Activated CD8-positive, alpha-beta T cell treated with anti-CD3 and anti-CD28 coated beads for 36 hours (primary cell): ENCODE measurements at regions of chr1 and their contacts with region 1.

Region 1: DNA sequence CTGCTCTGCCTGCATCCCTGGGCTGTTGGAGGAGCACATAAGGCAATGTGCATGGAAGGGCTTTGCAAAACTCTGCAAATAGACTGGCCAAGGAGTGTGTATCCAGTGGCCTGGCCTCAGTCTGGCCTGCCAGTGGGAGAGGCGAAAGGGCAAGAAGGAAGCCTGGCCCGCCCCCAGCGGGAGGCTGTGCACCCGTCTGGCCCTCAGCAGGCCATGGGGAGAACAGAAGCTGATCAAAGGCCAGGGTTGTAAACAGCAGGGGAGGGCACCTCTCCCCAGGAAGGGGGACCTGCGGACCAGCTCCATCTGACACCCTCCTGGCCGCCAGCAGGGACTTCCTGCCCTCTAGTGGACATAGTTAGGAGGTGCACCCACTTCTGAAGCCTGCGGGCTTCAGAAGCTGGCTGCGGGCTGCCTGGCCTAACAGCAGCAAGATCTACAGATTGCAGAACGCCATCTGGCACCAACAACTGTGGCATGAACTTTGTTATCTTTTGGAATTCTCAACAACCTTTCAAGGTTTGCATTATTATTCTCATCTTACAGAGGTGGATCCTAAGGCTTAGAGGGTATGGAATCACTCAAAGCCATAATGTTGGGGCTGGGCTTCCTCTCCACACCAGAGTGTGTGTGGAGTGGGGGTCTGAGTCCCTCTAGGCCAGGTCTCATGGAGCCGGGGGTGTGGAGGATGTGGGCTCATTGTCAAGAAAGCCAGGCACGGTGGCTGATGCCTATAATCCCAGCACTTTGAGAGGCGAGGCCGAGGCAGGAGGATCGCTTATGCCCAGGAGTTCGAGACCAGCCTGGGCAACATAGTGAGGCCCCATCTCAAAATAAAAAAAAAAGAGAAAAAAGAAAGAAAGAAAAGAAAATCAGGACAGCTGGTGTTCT is 18.9 kb upstream of the CDK18 start:
- DNase-seq: peak; percentile 79
- ATAC-seq: peak; percentile 76
- H3K4me3 Mint-ChIP-seq: no peak overlapping the region
- H3K27ac Mint-ChIP-seq: no peak overlapping the region
- H3K4me1 Mint-ChIP-seq: peaks cover 27% of the 10 kb centered on the region
- H3K27me3 Mint-ChIP-seq: peaks cover 42% of the 10 kb centered on the region
- CTCF ChIP-seq: peak; percentile 95

Region 2: DNA sequence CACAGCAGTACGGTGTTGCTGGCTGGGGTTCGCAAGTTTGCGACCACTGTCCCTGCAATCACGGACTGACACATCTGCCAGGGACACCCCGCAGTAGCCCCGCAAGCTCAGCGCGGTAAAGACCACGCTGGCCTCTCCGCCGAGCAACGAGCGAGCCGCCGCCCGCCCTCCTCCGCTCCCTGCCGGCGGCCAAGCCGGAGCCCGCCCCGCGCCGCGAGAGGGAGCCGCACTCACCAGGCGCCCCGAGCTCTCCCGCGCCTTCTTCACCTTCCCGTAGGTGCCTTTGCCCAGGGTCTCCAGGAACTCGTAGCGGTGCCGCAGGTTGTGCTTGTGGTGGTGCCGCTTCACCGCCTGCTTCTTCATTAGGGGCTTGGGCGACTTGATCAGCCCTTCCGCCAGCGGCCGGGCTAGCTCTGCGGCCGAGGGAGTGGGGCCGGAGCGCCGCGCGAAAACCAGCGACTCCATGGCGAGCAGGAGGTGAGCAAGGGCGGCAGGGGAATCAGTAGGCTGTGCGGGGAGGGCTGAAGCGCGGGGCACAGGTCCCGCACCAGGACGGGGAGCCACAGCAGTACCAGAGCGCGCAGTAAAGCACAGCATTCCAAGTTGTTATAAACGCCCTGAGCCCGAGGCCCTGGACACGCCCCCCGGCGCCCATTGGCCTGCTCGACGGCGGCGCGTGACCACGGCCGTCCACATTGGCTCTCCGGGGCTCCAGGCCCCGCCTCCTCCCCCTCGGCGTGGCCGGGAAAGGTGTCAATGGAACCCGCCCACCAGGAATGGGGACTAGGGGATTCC is 164.2 kb before region 1 on chr1 and contains the start of gene NUAK2:
- CTCF ChIA-PET with region 1: interaction called, 13 read pairs
- POLR2A ChIA-PET with region 1: interaction called, 3 read pairs
- intact Hi-C with region 1: no loop called
- DNase-seq: peak; percentile 85
- ATAC-seq: peak; percentile 76
- H3K4me3 Mint-ChIP-seq: peak within 1 kb of the TSS; percentile 78
- H3K27ac Mint-ChIP-seq: peak within 1 kb of the TSS; percentile 82
- H3K4me1 Mint-ChIP-seq: peaks cover 56% of the 10 kb centered on the region
- H3K27me3 Mint-ChIP-seq: no peaks in the 10 kb centered on the region
- CTCF ChIP-seq: peak; percentile 34
- total RNA-seq, gene NUAK2: 1.9 TPM

Region 3: GRCh38 chr1:205354259-205354904 is 131.2 kb before region 1 on chr1:
- CTCF ChIA-PET with region 1: interaction called, 121 read pairs
- POLR2A ChIA-PET with region 1: no interaction called
- intact Hi-C with region 1: loop called (anchors 1 kb)
- DNase-seq: peak; percentile 82
- ATAC-seq: peak; percentile 82
- H3K4me3 Mint-ChIP-seq: no peak overlapping the region
- H3K27ac Mint-ChIP-seq: no peak overlapping the region
- H3K4me1 Mint-ChIP-seq: no peaks in the 10 kb centered on the region
- H3K27me3 Mint-ChIP-seq: peaks cover 2% of the 10 kb centered on the region
- CTCF ChIP-seq: peak; percentile 88

Region 4: GRCh38 chr1:205410581-205411298 is 74.8 kb before region 1 on chr1:
- CTCF ChIA-PET with region 1: interaction called, 32 read pairs
- POLR2A ChIA-PET with region 1: no interaction called
- intact Hi-C with region 1: no loop called
- DNase-seq: no peak
- ATAC-seq: no peak
- H3K4me3 Mint-ChIP-seq: no peak overlapping the region
- H3K27ac Mint-ChIP-seq: no peak overlapping the region
- H3K4me1 Mint-ChIP-seq: peaks cover 4% of the 10 kb centered on the region
- H3K27me3 Mint-ChIP-seq: peaks cover 3% of the 10 kb centered on the region
- CTCF ChIP-seq: no peak

Region 5: GRCh38 chr1:205440476-205441317 is 44.9 kb before region 1 on chr1:
- CTCF ChIA-PET with region 1: interaction called, 42 read pairs
- POLR2A ChIA-PET with region 1: interaction called, 3 read pairs
- intact Hi-C with region 1: no loop called
- DNase-seq: peak; percentile 82
- ATAC-seq: peak; percentile 96
- H3K4me3 Mint-ChIP-seq: peak overlapping the region; percentile 74
- H3K27ac Mint-ChIP-seq: peak overlapping the region; percentile 89
- H3K4me1 Mint-ChIP-seq: peaks cover 22% of the 10 kb centered on the region
- H3K27me3 Mint-ChIP-seq: peaks cover 1% of the 10 kb centered on the region
- CTCF ChIP-seq: no peak

Region 6: GRCh38 chr1:205512059-205513045 is 26.8 kb after region 1 on chr1:
- CTCF ChIA-PET with region 1: interaction called, 16 read pairs
- POLR2A ChIA-PET with region 1: no interaction called
- intact Hi-C with region 1: no loop called
- DNase-seq: peak; percentile 11
- ATAC-seq: no peak
- H3K4me3 Mint-ChIP-seq: no peak overlapping the region
- H3K27ac Mint-ChIP-seq: peak overlapping the region; percentile 3
- H3K4me1 Mint-ChIP-seq: peaks cover 6% of the 10 kb centered on the region
- H3K27me3 Mint-ChIP-seq: no peaks in the 10 kb centered on the region
- CTCF ChIP-seq: no peak

Region 7: DNA sequence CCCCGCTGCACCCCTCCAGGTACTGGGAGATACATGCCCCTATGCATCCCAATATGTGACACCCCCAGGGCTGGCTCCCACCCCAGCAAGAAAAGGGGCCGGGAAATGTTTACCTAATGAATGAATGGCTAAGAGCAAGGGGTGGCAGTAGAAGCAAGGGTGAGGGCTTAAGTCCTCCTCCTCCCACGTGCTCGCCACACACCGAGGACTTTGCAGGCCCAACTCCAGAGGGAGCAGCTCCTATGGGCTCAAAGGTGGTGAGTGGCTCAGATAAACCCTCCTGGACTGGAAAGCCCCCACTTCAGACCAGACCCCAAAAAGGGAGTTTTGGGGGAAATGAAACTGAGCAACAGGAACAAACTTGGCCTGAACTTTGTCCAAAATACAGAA is 183.4 kb after region 1 on chr1:
- CTCF ChIA-PET with region 1: no interaction called
- POLR2A ChIA-PET with region 1: no interaction called
- intact Hi-C with region 1: no loop called
- DNase-seq: no peak
- ATAC-seq: peak; percentile 31
- H3K4me3 Mint-ChIP-seq: no peak overlapping the region
- H3K27ac Mint-ChIP-seq: no peak overlapping the region
- H3K4me1 Mint-ChIP-seq: peaks cover 7% of the 10 kb centered on the region
- H3K27me3 Mint-ChIP-seq: peaks cover 9% of the 10 kb centered on the region
- CTCF ChIP-seq: no peak